Heart left ventricle (tissue), 16 donors: ENCODE measurements at regions of chr17 and their contacts with region 1.

Region 1: GRCh38 chr17:1055751-1056645 is 59.1 kb downstream of the TIMM22 start:
- DNase-seq: peak; percentile 64 to 81 (median 76)
- ATAC-seq: peak; percentile 64 to 80 (median 70)
- H3K4me3 ChIP-seq: no peak overlapping the region
- H3K27ac ChIP-seq: peak overlapping the region in 5 of 12 donors; percentile 19 to 58 (median 43)
- H3K4me1 ChIP-seq: peaks cover 0 to 25% (median 8%) of the 10 kb centered on the region in 12 donors
- H3K27me3 ChIP-seq: no peaks in the 10 kb centered on the region
- CTCF ChIP-seq: peak; percentile 68 to 83 (median 80)
- POLR2A ChIP-seq: no peak

Region 2: DNA sequence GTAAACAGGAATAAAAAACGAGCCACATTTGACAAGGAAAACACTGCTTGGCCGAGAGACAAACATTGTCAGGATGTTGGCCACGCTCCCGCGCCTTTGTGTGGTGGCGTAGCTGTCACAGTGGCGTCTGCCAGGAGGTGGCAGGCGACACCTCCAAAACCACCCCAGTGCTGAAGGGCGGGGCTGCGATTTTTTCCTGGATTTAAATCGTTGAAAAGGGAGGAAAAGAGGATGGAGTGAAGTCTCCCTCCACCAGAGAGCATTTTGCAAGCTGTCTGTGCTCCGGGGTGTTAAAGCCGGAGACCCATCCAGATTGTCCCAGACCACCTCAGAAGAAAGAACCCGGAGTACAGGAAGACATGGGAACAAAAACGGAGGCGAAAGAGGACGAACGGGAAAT is 261.1 kb before region 1 on chr17:
- intact Hi-C with region 1: loop called (anchors 2 to 10 kb)
- DNase-seq: peak; percentile 85 to 91 (median 88)
- ATAC-seq: peak; percentile 47 to 81 (median 63)
- H3K4me3 ChIP-seq: peak overlapping the region in 11 of 12 donors; percentile 14 to 55 (median 43)
- H3K27ac ChIP-seq: peak overlapping the region in 10 of 12 donors; percentile 4 to 74 (median 51)
- H3K4me1 ChIP-seq: peaks cover 0 to 30% (median 10%) of the 10 kb centered on the region in 12 donors
- H3K27me3 ChIP-seq: no peaks in the 10 kb centered on the region
- CTCF ChIP-seq: peak; percentile 73 to 97 (median 89)
- POLR2A ChIP-seq: no peak

Region 3: GRCh38 chr17:933312-934083 is 122.5 kb before region 1 on chr17:
- intact Hi-C with region 1: no loop called
- DNase-seq: no peak
- ATAC-seq: peak in 3 of 4 donors; percentile 63 to 71 (median 63)
- H3K4me3 ChIP-seq: peak overlapping the region in 1 of 12 donors; percentile 12
- H3K27ac ChIP-seq: peak overlapping the region in 5 of 12 donors; percentile 5 to 78 (median 39)
- H3K4me1 ChIP-seq: peaks cover 0 to 22% (median 10%) of the 10 kb centered on the region in 12 donors
- H3K27me3 ChIP-seq: no peaks in the 10 kb centered on the region
- CTCF ChIP-seq: no peak
- POLR2A ChIP-seq: no peak

Region 4: GRCh38 chr17:996554-997344 is 59.2 kb before region 1 on chr17 and contains the start of gene TIMM22:
- intact Hi-C with region 1: loop called in 6 of 10 experiments (anchors 2 to 5 kb)
- DNase-seq: peak; percentile 92 to 95 (median 95)
- ATAC-seq: peak; percentile 93 to 96 (median 95)
- H3K4me3 ChIP-seq: peak within 1 kb of the TSS; percentile 75 to 100 (median 86)
- H3K27ac ChIP-seq: peak within 1 kb of the TSS; percentile 78 to 99 (median 92)
- H3K4me1 ChIP-seq: peaks cover 6 to 48% (median 38%) of the 10 kb centered on the region in 12 donors
- H3K27me3 ChIP-seq: no peaks in the 10 kb centered on the region
- CTCF ChIP-seq: peak; percentile 84 to 98 (median 93)
- POLR2A ChIP-seq: peak; percentile 2 to 59
- total RNA-seq, gene TIMM22: 12.5 to 20.4 (median 16.5) TPM

Region 5: DNA sequence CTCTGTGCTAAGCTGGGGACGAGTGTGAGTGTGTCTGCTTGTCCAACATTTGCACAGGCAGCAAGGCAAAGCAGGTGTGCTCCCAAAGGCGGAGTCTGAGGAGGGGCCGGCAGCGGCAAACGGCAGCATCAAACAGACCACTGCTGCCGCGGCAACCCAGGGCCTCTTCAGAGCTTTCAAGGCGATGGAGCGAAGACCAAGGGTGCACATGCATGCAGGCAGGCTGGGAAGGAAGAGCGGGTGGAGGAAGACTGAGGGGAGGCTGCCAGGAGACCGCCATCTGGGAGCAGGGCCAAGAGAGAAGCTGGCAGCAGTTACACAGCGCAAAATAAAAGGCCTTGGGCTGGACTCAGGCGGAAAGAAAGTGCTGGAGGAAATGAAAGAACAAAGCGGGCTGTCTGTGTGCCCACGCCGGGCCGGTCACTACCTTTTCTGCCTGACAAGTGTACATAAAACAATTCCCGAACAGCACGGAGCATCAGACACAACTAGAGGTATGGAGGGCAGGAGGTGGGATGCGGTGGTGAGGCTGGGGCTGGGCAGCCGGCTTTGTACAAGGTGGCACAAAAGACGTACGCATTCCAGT is 50.5 kb before region 1 on chr17:
- intact Hi-C with region 1: loop called in 8 of 10 experiments (anchors 2 to 5 kb)
- DNase-seq: peak in 4 of 5 donors; percentile 68 to 82 (median 74)
- ATAC-seq: peak; percentile 21 to 55 (median 36)
- H3K4me3 ChIP-seq: no peak overlapping the region
- H3K27ac ChIP-seq: peak overlapping the region; percentile 43 to 89 (median 78)
- H3K4me1 ChIP-seq: peaks cover 16 to 95% (median 79%) of the 10 kb centered on the region in 12 donors
- H3K27me3 ChIP-seq: no peaks in the 10 kb centered on the region
- CTCF ChIP-seq: no peak
- POLR2A ChIP-seq: no peak

Region 6: GRCh38 chr17:1108861-1109605 is 53.0 kb after region 1 on chr17:
- intact Hi-C with region 1: loop called in 1 of 10 experiments (anchors 5 kb)
- DNase-seq: peak; percentile 73 to 88 (median 76)
- ATAC-seq: peak in 3 of 4 donors; percentile 1 to 33 (median 21)
- H3K4me3 ChIP-seq: peak overlapping the region; percentile 60 to 86 (median 74)
- H3K27ac ChIP-seq: peak overlapping the region; percentile 92 to 99 (median 96)
- H3K4me1 ChIP-seq: peaks cover 13 to 80% (median 67%) of the 10 kb centered on the region in 12 donors
- H3K27me3 ChIP-seq: no peaks in the 10 kb centered on the region
- CTCF ChIP-seq: no peak
- POLR2A ChIP-seq: peak in 1 of 2 donors; percentile 55

Region 7: DNA sequence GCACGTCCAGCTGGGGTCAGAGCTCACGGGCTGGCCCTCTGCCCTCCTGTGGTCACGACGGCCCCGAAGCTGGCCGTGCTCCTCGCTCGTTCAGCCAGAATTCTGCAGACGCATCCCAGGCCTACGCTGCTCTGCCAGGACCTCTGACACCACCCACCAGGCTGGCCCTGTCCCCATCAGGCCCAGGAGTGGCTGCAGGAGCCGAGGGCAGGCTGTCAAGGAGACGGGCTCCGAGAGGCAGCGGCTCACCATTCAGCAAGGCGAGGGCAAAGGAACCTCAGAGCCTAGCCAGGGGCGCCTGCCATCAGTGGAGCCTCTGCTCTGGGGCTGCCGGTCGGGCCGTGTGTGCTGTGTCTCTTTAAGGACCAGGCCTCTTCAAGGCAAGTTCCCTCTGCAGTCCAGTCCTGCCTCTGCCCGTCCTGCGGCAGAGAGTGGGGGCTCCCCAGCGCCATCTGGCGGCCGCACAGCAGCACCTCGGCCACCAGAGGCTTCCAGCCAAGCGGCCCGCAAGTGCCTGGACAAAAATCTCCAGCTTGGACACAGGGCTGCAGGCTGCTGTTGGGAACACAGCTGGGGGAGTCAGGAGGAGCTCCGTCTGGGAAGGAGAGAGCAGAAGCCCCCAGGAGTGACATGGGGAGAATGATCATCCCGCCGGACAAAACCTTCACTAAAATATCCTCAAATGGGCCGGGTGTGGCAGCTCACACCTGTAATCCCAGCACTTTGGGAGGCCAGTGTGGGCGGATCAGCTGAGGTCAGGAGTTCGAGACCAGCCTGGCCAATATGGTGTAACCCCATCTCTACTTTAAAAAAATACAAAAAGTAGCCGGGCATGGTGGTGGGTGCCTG is 131.1 kb after region 1 on chr17:
- intact Hi-C with region 1: loop called in 4 of 10 experiments (anchors 2 to 10 kb)
- DNase-seq: peak; percentile 89 to 93 (median 91)
- ATAC-seq: peak; percentile 84 to 93 (median 91)
- H3K4me3 ChIP-seq: peak overlapping the region; percentile 18 to 59 (median 48)
- H3K27ac ChIP-seq: peak overlapping the region; percentile 14 to 90 (median 84)
- H3K4me1 ChIP-seq: peaks cover 2 to 66% (median 47%) of the 10 kb centered on the region in 12 donors
- H3K27me3 ChIP-seq: no peaks in the 10 kb centered on the region
- CTCF ChIP-seq: peak; percentile 98 to 99 (median 98)
- POLR2A ChIP-seq: peak in 1 of 2 donors; percentile 36

Region 8: GRCh38 chr17:1231456-1231855 is 175.5 kb after region 1 on chr17:
- intact Hi-C with region 1: no loop called
- DNase-seq: peak; percentile 32 to 72 (median 63)
- ATAC-seq: peak in 3 of 4 donors; percentile 30 to 74 (median 69)
- H3K4me3 ChIP-seq: no peak overlapping the region
- H3K27ac ChIP-seq: peak overlapping the region in 1 of 12 donors; percentile 58
- H3K4me1 ChIP-seq: peaks cover 0 to 40% (median 19%) of the 10 kb centered on the region in 12 donors
- H3K27me3 ChIP-seq: peaks cover 9 to 53% (median 26%) of the 10 kb centered on the region in 9 donors
- CTCF ChIP-seq: no peak
- POLR2A ChIP-seq: no peak